ENCODE measurements at regions of chr2 and their contacts with region 1.

Region 1: GRCh38 chr2:134287323-134287722 is 33.5 kb downstream of the MGAT5 start:
- DNase-seq: no peak
- ATAC-seq: no peak
- H3K4me3 ChIP-seq: no peak overlapping the region
- H3K4me3 Mint-ChIP-seq: no peak overlapping the region
- H3K27ac ChIP-seq: no peak overlapping the region
- H3K27ac Mint-ChIP-seq: no peak overlapping the region
- H3K4me1 ChIP-seq: peaks cover 47% of the 10 kb centered on the region
- H3K4me1 Mint-ChIP-seq: peaks cover 16 to 27% of the 10 kb centered on the region in 2 donors
- H3K27me3 ChIP-seq: peaks cover 17% of the 10 kb centered on the region
- H3K27me3 Mint-ChIP-seq: peaks cover 19 to 39% of the 10 kb centered on the region in 2 donors
- CTCF ChIP-seq: no peak

Region 2: GRCh38 chr2:133844214-133844892 is 443.0 kb before region 1 on chr2:
- intact Hi-C with region 1: no loop called
- DNase-seq: peak in 1 of 2 donors; percentile 73
- ATAC-seq: peak; percentile 69 to 87 (median 69)
- H3K4me3 ChIP-seq: no peak overlapping the region
- H3K4me3 Mint-ChIP-seq: no peak overlapping the region
- H3K27ac ChIP-seq: no peak overlapping the region
- H3K27ac Mint-ChIP-seq: no peak overlapping the region
- H3K4me1 ChIP-seq: no peaks in the 10 kb centered on the region
- H3K4me1 Mint-ChIP-seq: peaks cover 5 to 6% of the 10 kb centered on the region in 2 donors
- H3K27me3 ChIP-seq: no peaks in the 10 kb centered on the region
- H3K27me3 Mint-ChIP-seq: peaks cover 6 to 23% of the 10 kb centered on the region in 2 donors
- CTCF ChIP-seq: peak; percentile 76

Region 3: DNA sequence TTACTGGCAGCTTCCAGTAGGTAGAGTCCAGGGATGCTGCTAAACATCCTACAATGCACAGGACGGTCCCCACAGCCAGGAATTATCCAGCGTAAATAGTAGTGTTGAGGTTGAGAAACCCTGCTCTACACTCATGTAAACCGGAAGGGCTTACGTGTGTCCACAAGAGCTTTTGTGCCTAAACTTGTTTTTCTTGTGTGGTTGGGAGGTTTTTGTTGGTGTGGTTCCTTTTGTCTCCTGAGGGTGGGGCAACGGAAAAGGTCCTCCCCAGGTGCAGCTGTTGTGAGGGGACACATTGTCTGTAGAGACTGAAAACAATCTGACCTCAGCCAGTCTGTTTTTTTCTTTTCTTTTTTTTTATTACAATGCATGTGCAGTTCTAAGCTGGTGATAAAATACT is 106.1 kb before region 1 on chr2:
- intact Hi-C with region 1: no loop called
- DNase-seq: peak in 1 of 2 donors; percentile 78
- ATAC-seq: peak; percentile 47 to 74 (median 66)
- H3K4me3 ChIP-seq: no peak overlapping the region
- H3K4me3 Mint-ChIP-seq: peak overlapping the region; percentile 42
- H3K27ac ChIP-seq: peak overlapping the region; percentile 64
- H3K27ac Mint-ChIP-seq: peak overlapping the region; percentile 80 to 85
- H3K4me1 ChIP-seq: peaks cover 21% of the 10 kb centered on the region
- H3K4me1 Mint-ChIP-seq: peaks cover 75 to 89% of the 10 kb centered on the region in 2 donors
- H3K27me3 ChIP-seq: no peaks in the 10 kb centered on the region
- H3K27me3 Mint-ChIP-seq: no peaks in the 10 kb centered on the region
- CTCF ChIP-seq: no peak

Region 4: DNA sequence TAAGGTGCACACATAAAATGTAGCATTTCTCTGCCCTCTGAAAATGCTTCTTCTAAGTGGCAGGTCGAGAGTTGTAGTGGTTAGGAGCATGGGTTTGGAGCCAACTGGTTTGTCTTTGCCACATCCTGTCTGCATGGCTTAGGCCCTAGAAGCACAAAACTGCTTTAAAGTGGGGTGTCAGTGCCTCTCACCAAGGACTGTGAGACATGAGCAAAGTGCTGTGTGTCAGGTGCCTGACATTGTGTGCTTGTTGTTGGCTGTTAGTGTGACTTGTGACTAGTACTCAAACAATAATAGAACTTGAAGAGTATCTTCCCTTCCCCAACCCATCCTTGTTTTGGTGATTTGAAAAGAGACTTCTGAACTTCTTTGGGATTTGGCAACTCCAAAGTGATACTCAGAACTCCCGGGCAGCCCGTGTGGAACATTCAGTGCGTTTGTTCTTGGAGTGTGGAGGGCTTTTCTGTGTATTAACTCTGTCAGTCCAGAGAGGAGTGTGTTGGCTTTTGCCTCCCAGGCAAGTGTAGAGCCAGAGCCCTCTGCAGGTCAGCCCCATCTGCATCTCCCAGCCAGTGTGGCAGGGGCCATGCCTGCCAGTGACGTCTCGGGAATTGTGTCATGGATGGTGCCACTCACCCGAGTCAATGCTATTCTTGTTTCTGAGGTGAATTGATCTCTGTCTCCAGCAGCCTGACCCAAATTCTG is 28.5 kb before region 1 on chr2:
- intact Hi-C with region 1: loop called (anchors 1 kb)
- DNase-seq: peak; percentile 35 to 81
- ATAC-seq: peak; percentile 91 to 98 (median 92)
- H3K4me3 ChIP-seq: no peak overlapping the region
- H3K4me3 Mint-ChIP-seq: peak overlapping the region; percentile 52
- H3K27ac ChIP-seq: peak overlapping the region; percentile 2
- H3K27ac Mint-ChIP-seq: peak overlapping the region; percentile 5 to 66
- H3K4me1 ChIP-seq: peaks cover 55% of the 10 kb centered on the region
- H3K4me1 Mint-ChIP-seq: peaks cover 24 to 52% of the 10 kb centered on the region in 2 donors
- H3K27me3 ChIP-seq: no peaks in the 10 kb centered on the region
- H3K27me3 Mint-ChIP-seq: peaks cover 22 to 31% of the 10 kb centered on the region in 2 donors
- CTCF ChIP-seq: no peak

Measured in natural killer cell (primary cell).